GM13977 (cell line): ENCODE measurements at regions of chr21 and their contacts with region 1.

Region 1: DNA sequence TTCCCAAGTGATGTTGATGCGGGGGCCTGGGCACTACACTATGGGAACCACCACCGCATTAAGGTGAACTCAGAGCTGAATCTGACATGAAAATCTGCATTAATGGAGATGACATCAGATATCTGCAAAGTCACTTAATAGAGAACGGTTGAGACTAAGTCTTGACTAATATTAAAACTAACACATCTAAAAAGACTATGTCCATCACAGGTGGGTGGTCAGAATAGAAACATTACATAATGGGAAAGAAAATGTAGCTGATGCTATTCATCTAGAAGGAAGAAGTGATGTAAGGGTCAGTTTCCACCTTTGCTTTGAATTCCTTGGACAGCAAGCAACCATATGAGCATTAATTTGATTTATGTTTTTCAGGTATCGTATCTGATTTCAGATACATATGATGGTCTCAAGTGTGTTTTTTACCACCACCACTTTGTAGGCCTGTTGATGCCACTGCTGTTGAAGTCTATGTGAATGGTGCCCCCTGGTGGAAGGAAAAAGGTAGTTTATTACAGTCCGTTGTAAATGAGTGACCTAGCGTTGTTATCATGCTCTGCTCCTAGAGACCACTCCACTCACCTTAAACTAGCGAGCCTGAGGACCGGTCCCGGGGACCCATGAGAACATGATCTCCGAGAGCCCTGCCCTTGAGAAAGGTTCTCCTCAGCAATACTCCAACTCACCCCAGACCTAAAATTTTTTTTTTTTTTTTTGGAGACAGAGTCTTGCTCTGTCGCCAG is 73.5 kb downstream of the BACH1 start:
- DNase-seq: peak; percentile 65
- CTCF ChIP-seq: peak; percentile 71

Region 2: GRCh38 chr21:29085106-29085752 is 287.0 kb before region 1 on chr21:
- in situ Hi-C with region 1: loop called (anchors 5 kb)
- DNase-seq: no peak
- CTCF ChIP-seq: no peak

Region 3: DNA sequence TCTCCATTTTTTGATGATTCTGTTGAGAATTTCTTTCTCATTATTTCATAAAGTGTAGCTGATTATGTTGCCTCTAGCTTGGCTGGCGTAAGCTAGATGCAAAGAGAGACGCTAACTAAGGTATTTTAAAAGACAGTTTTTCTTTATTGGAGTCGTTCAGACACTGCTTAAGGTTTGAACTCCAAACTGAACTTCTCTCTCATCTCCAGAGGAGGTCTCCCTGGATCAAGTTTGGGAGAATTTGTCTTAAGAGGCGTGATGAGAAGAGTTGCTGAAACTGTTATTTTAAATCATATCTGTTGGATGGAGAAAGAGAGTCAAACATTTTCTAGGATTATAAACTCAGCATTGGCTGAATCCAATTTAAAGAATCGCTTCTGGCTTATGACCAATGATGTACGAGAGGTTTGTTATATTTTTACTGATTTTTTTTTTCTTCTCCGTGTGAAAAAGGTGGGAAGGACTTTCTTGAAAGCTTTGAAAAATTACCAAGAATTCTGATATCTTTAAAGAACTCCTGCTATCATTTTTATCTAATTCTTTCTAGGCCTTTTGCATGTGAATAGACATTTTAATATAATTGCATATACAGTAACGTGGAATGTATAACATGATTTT is 207.8 kb before region 1 on chr21:
- in situ Hi-C with region 1: loop called (anchors 10 kb)
- DNase-seq: peak; percentile 28
- CTCF ChIP-seq: peak; percentile 60

Region 4: DNA sequence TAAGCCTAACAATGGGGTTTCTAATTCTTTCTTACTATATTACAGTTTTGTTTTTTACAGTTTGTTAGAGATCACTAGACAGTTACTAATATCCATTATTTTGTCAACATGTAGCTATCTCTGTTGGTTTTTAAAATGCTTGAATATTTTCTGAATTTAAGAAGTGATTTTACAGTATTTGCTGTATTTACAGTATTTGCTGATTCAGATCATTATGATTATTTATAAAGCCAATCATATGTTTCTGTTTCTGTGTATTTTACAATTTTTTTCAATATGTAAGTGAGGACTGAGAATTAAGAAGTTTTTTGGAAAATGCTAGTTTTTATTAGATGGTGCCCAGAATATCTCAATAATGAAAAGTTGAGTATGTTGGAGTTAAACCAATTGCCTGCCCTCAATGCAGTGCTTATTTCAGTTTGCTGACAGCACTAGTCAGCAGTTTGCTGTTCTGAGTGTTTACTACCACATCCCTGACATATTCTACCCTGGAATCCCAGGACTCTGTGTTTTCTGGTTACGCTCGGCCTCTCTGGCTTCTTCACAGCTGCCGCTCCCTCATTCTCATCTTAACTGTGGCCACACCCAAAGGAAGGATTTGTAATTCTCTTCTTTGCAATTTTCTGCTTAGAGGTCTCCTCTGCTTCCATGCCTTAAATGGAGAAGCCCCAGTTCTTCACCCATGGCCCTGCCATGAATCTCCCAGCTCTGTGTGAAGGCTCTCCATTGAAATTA is 141.5 kb before region 1 on chr21:
- in situ Hi-C with region 1: no loop called
- DNase-seq: no peak
- CTCF ChIP-seq: no peak